ENCODE measurements at regions of chr5 and their contacts with region 1.

Region 1: DNA sequence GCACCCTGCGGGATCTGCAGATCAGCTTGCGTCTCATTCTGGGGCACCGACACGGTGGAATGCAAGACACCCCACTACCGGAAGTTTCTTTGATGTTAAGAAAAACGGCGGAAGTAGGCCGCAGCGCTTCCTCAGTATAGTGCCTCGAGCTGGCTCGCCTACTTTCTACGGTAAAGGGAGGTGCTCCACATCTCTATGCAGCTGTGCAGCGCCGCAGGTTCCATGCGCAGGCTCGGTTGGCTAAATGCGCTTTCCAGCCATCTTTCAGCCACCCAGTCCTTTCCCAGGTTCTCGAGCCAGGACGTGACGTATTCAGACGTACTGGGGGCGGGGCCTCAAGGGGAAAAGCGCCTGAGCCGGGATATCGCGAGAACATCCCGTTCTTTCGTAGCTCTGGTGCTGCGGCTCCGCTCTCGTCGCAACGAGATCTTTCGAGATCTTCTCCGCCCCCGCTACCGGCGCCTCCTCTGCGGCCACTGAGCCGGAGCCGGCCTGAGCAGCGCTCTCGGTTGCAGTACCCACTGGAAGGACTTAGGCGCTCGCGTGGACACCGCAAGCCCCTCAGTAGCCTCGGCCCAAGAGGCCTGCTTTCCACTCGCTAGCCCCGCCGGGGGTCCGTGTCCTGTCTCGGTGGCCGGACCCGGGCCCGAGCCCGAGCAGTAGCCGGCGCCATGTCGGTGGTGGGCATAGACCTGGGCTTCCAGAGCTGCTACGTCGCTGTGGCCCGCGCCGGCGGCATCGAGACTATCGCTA is at the start of gene HSPA4:
- DNase-seq: peak; percentile 96 to 100
- ATAC-seq: peak; percentile 84 to 91 (median 87)
- H3K4me3 ChIP-seq: peak within 1 kb of the TSS; percentile 91
- H3K4me3 Mint-ChIP-seq: peak within 1 kb of the TSS; percentile 91
- H3K27ac ChIP-seq: peak within 1 kb of the TSS; percentile 87
- H3K27ac Mint-ChIP-seq: peak within 1 kb of the TSS; percentile 98 to 99
- H3K4me1 ChIP-seq: peaks cover 25% of the 10 kb centered on the region
- H3K4me1 Mint-ChIP-seq: peaks cover 23 to 41% of the 10 kb centered on the region in 2 donors
- H3K27me3 ChIP-seq: no peaks in the 10 kb centered on the region
- H3K27me3 Mint-ChIP-seq: peaks cover 0 to 4% of the 10 kb centered on the region in 2 donors
- CTCF ChIP-seq: no peak
- total RNA-seq, gene HSPA4: 38.3 to 58.6 (median 43.0) TPM

Region 2: GRCh38 chr5:132729896-132730295 is 321.9 kb before region 1 on chr5:
- intact Hi-C with region 1: no loop called
- DNase-seq: no peak
- ATAC-seq: no peak
- H3K4me3 ChIP-seq: no peak overlapping the region
- H3K4me3 Mint-ChIP-seq: no peak overlapping the region
- H3K27ac ChIP-seq: no peak overlapping the region
- H3K27ac Mint-ChIP-seq: no peak overlapping the region
- H3K4me1 ChIP-seq: no peaks in the 10 kb centered on the region
- H3K4me1 Mint-ChIP-seq: no peaks in the 10 kb centered on the region
- H3K27me3 ChIP-seq: no peaks in the 10 kb centered on the region
- H3K27me3 Mint-ChIP-seq: no peaks in the 10 kb centered on the region
- CTCF ChIP-seq: no peak

Region 3: DNA sequence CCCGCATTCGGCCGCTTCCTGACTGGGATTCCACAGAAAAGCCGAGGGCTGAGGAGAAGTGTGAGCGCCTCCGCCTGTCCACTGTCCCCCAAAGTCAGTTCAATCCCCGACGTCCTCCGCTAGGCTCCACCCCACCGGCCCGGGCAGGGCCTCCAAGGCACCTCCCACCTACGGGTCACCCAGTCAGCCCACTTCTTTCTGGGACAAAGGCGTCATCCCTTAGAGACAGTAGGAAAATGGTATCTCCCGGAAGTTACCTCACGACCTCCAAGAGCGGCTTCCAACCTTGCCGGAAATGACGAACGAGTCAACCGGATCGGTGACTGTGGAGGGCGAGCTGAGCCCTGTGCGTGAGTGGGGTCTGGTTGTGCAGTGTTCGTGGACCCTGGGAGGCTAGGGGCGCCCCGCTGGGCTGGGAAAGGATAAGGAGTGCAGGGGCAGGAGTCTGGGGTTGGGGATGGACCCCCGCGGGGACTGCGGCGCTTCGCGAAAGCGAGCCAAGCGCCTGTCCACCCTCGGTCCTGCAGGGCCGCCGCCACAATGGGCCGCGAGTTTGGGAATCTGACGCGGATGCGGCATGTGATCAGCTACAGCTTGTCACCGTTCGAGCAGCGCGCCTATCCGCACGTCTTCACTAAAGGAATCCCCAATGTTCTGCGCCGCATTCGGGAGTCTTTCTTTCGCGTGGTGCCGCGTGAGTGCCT is 185.3 kb before region 1 on chr5 and contains the starts of genes GDF9 and UQCRQ:
- intact Hi-C with region 1: loop called (anchors 1 kb)
- DNase-seq: peak; percentile 86 to 99
- ATAC-seq: peak; percentile 96 to 99 (median 96)
- H3K4me3 ChIP-seq: peak within 1 kb of the TSS; percentile 73
- H3K4me3 Mint-ChIP-seq: peak within 1 kb of the TSS; percentile 100
- H3K27ac ChIP-seq: peak within 1 kb of the TSS; percentile 98
- H3K27ac Mint-ChIP-seq: peak within 1 kb of the TSS; percentile 97 to 99
- H3K4me1 ChIP-seq: peaks cover 14% of the 10 kb centered on the region
- H3K4me1 Mint-ChIP-seq: peaks cover 26 to 27% of the 10 kb centered on the region in 2 donors
- H3K27me3 ChIP-seq: no peaks in the 10 kb centered on the region
- H3K27me3 Mint-ChIP-seq: peaks cover 0 to 9% of the 10 kb centered on the region in 2 donors
- CTCF ChIP-seq: no peak
- total RNA-seq, gene GDF9: 0.53 to 0.78 (median 0.57) TPM
- total RNA-seq, gene UQCRQ: 114 to 116 (median 115) TPM

Region 4: DNA sequence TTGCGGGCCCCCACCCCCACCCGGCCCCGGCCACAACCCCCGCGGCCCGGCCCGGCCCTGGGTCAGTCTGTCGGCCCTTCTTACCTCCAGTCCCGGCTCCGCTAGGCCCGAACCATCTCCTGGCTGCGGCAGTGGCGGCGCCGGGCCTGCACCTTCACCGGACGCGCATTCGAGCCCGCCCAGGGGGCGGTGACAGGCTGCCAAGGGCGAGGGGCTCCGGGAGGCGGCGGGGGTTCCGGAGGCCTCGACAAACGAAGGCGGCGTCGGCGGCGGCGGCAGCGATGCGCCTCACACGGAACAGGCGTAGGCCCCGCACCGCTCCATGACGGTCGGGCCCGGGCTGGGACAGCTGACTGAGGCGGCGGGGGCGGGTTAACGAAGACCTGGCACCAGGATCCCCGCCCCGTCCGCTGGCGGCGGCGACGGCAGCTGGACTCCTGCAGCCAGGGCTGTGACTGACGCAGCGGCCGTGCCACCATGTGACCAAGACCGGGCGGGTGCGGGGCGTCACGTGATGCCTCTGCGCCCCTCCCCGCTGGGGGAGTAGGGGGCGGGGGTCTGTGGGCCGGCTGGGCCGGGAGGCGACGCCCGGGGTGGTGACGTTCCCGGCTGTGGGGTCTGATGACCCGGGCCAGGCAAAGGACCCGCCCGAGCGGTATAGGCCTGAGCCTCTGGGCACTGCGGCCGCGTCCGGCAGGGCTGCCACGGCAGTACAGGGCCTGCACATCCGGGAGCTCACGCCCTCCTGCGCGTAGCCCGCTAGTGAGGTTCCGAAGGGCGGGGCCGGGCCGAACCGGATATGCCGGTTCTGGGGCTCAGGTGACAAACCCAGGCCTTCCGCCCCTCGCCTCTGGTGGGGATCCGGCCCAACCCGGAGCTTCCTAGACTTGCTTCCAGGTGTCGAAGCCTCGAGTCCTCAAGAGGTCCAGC is 88.3 kb before region 1 on chr5 and contains the start of gene AFF4:
- intact Hi-C with region 1: loop called (anchors 1 kb)
- DNase-seq: peak; percentile 89 to 91
- ATAC-seq: peak; percentile 85 to 94 (median 88)
- H3K4me3 ChIP-seq: peak within 1 kb of the TSS; percentile 64
- H3K4me3 Mint-ChIP-seq: peak within 1 kb of the TSS; percentile 97
- H3K27ac ChIP-seq: peak within 1 kb of the TSS; percentile 94
- H3K27ac Mint-ChIP-seq: peak within 1 kb of the TSS; percentile 90 to 93
- H3K4me1 ChIP-seq: peaks cover 13% of the 10 kb centered on the region
- H3K4me1 Mint-ChIP-seq: peaks cover 31% of the 10 kb centered on the region in 2 donors
- H3K27me3 ChIP-seq: no peaks in the 10 kb centered on the region
- H3K27me3 Mint-ChIP-seq: no peaks in the 10 kb centered on the region
- CTCF ChIP-seq: no peak
- total RNA-seq, gene AFF4: 87.5 to 98.1 (median 90.8) TPM

Region 5: GRCh38 chr5:133025804-133026663 is 25.7 kb before region 1 on chr5 and contains the start of gene ZCCHC10:
- intact Hi-C with region 1: loop called (anchors 1 kb)
- DNase-seq: peak; percentile 85 to 95
- ATAC-seq: peak; percentile 98 to 99 (median 99)
- H3K4me3 ChIP-seq: peak within 1 kb of the TSS; percentile 99
- H3K4me3 Mint-ChIP-seq: peak within 1 kb of the TSS; percentile 97
- H3K27ac ChIP-seq: peak within 1 kb of the TSS; percentile 94
- H3K27ac Mint-ChIP-seq: peak within 1 kb of the TSS; percentile 96
- H3K4me1 ChIP-seq: peaks cover 6% of the 10 kb centered on the region
- H3K4me1 Mint-ChIP-seq: peaks cover 16 to 21% of the 10 kb centered on the region in 2 donors
- H3K27me3 ChIP-seq: no peaks in the 10 kb centered on the region
- H3K27me3 Mint-ChIP-seq: no peaks in the 10 kb centered on the region
- CTCF ChIP-seq: no peak
- total RNA-seq, gene ZCCHC10: 18.4 to 20.5 (median 20.4) TPM

Measured in natural killer cell (primary cell).